ENCODE measurements at regions of chr14 and their contacts with region 1.

Region 1: GRCh38 chr14:49940808-49941421 is 48.0 kb downstream of the ARF6 start:
- DNase-seq: no peak
- ATAC-seq: no peak
- H3K4me3 ChIP-seq: peak overlapping the region in 1 of 5 experiments; percentile 29
- H3K4me3 Mint-ChIP-seq: peak overlapping the region; percentile 41
- H3K27ac ChIP-seq: peak overlapping the region in 1 of 2 donors; percentile 54
- H3K27ac Mint-ChIP-seq: peak overlapping the region; percentile 65
- H3K4me1 ChIP-seq: peaks cover 22 to 25% of the 10 kb centered on the region in 2 donors
- H3K4me1 Mint-ChIP-seq: peaks cover 44% of the 10 kb centered on the region
- H3K27me3 ChIP-seq: no peaks in the 10 kb centered on the region
- H3K27me3 Mint-ChIP-seq: no peaks in the 10 kb centered on the region
- CTCF ChIP-seq: no peak

Region 2: GRCh38 chr14:49770212-49770817 is 170.6 kb before region 1 on chr14:
- CTCF ChIA-PET with region 1: no interaction called
- POLR2A ChIA-PET with region 1: no interaction called
- intact Hi-C with region 1: no loop called
- DNase-seq: no peak
- ATAC-seq: no peak
- H3K4me3 ChIP-seq: no peak overlapping the region
- H3K4me3 Mint-ChIP-seq: peak overlapping the region; percentile 49
- H3K27ac ChIP-seq: peak overlapping the region; percentile 4 to 62
- H3K27ac Mint-ChIP-seq: peak overlapping the region; percentile 32
- H3K4me1 ChIP-seq: peaks cover 22 to 29% of the 10 kb centered on the region in 2 donors
- H3K4me1 Mint-ChIP-seq: peaks cover 31% of the 10 kb centered on the region
- H3K27me3 ChIP-seq: no peaks in the 10 kb centered on the region
- H3K27me3 Mint-ChIP-seq: no peaks in the 10 kb centered on the region
- CTCF ChIP-seq: no peak

Region 3: DNA sequence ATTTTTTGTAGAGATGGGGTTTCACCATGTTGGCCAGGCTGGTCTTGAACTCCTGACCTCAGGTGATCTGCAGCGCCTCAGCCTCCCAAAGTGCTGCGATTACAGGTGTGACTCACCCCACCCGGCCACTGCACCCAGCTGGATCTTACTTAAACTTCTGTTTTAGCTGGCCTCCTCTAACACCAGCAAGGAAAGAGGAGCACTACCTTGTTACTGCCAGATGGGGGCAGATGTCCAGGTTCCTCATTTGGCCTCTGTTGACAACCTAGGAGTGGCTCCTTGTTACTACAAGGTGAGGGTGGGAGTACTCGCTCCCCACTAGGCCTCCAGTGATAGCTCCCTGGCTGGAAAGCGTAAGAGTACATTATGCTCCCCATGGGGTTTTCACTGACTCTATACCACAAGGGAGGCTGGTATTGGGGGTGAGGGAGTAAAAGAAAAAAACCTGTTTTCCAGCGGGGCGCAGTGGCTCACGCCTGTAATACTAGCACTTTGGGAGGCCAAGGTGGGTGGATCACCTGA is 61.2 kb before region 1 on chr14:
- CTCF ChIA-PET with region 1: interaction called, 5 read pairs
- POLR2A ChIA-PET with region 1: interaction called, 13 read pairs
- intact Hi-C with region 1: no loop called
- DNase-seq: peak; percentile 69
- ATAC-seq: peak; percentile 85
- H3K4me3 ChIP-seq: no peak overlapping the region
- H3K4me3 Mint-ChIP-seq: no peak overlapping the region
- H3K27ac ChIP-seq: peak overlapping the region in 1 of 2 donors; percentile 59
- H3K27ac Mint-ChIP-seq: peak overlapping the region; percentile 72
- H3K4me1 ChIP-seq: peaks cover 12 to 16% of the 10 kb centered on the region in 2 donors
- H3K4me1 Mint-ChIP-seq: peaks cover 15% of the 10 kb centered on the region
- H3K27me3 ChIP-seq: no peaks in the 10 kb centered on the region
- H3K27me3 Mint-ChIP-seq: no peaks in the 10 kb centered on the region
- CTCF ChIP-seq: peak; percentile 58